Prostate gland (tissue), 2 donors: ENCODE measurements at regions of chr1 and their contacts with region 1.

Region 1: DNA sequence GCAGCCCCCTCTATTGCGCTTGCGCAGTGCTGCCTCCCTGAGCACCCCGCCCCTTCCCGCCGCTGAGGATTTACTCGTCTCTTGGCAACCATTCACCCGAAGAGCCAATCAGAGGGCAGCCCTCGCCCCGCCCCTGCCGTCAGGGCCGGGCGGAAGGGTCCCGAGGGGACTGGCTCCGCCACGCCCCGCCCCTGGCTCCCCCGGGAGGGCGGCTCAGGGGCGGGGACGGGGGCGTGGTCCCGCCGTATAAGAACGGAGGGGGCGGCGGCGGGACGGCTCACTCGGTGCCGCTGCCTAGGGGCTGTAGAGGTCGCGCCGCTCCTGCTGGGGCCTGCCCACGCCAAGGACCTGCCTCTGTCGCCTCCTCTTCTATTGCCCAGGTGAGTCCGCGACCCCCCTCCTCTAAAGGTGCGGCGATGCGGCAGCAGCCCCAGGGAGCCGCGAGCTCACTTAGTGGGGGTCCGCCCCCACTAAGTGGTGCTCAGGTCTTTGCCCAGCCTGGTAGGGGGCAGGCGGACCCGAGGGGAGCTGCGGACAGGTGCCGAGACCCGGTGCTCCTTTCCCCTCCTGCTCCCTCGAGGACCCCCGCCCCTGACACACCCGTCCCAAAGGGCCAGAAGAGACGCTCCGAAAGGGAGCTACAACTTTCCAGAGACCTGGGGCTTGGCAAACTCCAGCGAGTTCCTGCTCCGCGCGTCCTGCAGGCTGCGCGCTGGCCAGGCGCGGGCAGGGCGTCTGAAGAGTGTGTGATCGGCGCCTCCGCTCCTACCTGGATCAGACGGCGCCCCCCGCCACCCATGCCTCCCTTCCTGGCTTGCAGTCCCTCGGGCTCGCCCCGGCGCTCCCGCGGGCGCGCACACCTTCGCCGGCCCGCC is at the start of gene TENT5C:
- DNase-seq: peak; percentile 99
- H3K4me3 ChIP-seq: peak within 1 kb of the TSS; percentile 75 to 81
- H3K27ac ChIP-seq: peak within 1 kb of the TSS; percentile 92 to 93
- H3K4me1 ChIP-seq: peaks cover 9% of the 10 kb centered on the region
- H3K27me3 ChIP-seq: no peaks in the 10 kb centered on the region
- CTCF ChIP-seq: peak in 2 of 4 experiments; percentile 7 to 10
- POLR2A ChIP-seq: peak; percentile 86
- total RNA-seq, gene TENT5C: 23.1 to 28.7 TPM

Region 2: DNA sequence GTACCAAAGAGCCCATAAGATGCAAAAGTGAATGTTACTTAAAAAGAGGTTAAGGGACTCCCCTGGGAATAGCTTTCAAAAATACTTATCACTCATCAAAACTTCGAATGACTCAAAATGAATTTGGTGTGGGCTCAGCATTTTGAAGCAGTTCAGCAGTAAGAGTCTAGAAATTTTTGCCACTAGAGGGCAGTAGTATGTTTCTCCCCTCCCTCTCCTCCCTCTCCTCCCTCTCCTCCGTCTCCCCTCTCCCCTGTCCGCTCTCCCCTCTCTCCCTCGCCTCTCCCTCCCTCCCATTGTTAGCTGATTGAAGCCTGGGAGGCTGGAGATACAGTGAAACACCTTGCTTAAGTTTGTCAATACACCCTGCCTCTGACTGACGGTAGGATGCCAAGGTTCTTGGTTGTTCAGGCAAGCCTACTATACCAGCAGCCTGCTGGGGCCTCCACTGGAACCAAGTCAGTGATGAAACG is 71.0 kb before region 1 on chr1:
- intact Hi-C with region 1: loop called (anchors 5 kb)
- DNase-seq: peak; percentile 58
- H3K4me3 ChIP-seq: no peak overlapping the region
- H3K27ac ChIP-seq: no peak overlapping the region
- H3K4me1 ChIP-seq: no peaks in the 10 kb centered on the region
- H3K27me3 ChIP-seq: no peaks in the 10 kb centered on the region
- CTCF ChIP-seq: peak; percentile 34 to 90 (median 70)
- POLR2A ChIP-seq: no peak

Region 3: GRCh38 chr1:117561551-117561950 is 44.5 kb before region 1 on chr1:
- intact Hi-C with region 1: no loop called
- DNase-seq: no peak
- H3K4me3 ChIP-seq: no peak overlapping the region
- H3K27ac ChIP-seq: no peak overlapping the region
- H3K4me1 ChIP-seq: peaks cover 7% of the 10 kb centered on the region
- H3K27me3 ChIP-seq: no peaks in the 10 kb centered on the region
- CTCF ChIP-seq: no peak
- POLR2A ChIP-seq: no peak

Region 4: DNA sequence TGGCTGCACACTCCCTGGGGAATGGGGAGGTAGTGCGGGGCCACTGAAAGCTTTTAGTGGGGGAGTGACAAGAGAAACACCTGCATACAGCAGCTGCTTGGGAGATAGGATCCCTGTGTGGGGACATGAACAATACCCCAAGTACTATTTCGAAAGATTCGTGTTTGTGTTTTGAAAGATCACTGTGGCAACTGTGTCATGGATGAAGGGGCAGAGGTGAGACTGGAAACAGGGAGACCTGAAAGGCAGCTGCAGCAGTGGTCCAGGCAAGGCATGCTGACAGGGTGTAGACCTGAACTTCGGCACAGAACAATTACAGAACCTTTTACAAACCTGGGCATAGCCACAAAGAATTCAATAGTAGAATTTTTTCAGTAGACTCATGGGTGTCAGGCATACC is 32.7 kb after region 1 on chr1:
- intact Hi-C with region 1: no loop called
- DNase-seq: no peak
- H3K4me3 ChIP-seq: no peak overlapping the region
- H3K27ac ChIP-seq: no peak overlapping the region
- H3K4me1 ChIP-seq: no peaks in the 10 kb centered on the region
- H3K27me3 ChIP-seq: no peaks in the 10 kb centered on the region
- CTCF ChIP-seq: no peak
- POLR2A ChIP-seq: no peak

Region 5: GRCh38 chr1:117802531-117803257 is 196.7 kb after region 1 on chr1:
- intact Hi-C with region 1: no loop called
- DNase-seq: no peak
- H3K4me3 ChIP-seq: no peak overlapping the region
- H3K27ac ChIP-seq: no peak overlapping the region
- H3K4me1 ChIP-seq: no peaks in the 10 kb centered on the region
- H3K27me3 ChIP-seq: no peaks in the 10 kb centered on the region
- CTCF ChIP-seq: no peak
- POLR2A ChIP-seq: no peak